ENCODE measurements at regions of chr15 and their contacts with region 1.

Region 1: DNA sequence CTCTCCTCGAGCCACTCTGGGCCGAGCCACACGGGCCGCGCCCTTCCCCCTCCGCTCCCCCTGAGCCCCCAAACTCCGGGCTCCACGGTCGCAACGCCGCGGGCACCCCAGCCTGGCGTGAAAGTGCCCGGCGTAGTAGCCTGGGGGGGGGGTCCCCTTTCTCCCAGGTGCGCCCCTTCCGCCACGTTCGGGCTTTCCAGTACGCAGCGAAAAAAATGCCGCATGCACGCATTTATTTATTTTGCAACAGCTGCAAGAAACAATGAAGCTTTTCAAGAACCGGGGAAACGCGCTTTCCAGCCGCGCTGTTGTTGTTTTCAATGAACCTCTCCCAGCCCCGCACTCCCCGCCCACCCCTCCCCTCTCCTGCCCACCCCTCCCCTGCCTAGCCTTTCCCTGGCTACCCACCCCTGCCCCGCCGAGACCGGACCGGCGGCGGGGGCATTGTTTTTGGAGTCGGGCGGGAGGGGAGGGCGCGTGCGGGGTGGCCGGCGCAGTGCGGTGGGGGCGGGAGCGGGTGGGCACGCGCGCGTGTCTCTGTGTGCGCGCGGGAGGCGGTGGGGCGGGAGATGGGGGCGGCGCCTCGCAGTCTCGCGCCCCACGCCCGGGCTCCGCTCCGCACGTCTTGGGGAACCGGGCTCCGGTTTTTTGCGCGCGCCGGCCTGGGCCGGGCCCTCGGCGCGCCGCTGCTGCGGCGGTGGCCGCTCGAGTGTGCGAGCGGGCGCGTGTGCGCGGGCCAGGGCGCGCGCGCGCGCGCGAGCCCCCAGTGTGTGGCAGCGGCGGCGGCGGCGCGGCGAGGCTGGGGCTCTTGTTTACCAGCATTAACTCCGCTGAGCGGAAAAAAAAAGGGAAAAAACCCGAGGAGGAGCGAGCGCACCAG is at the start of gene IGF1R:
- DNase-seq: peak; percentile 93
- ATAC-seq: peak; percentile 36
- H3K4me3 ChIP-seq: peak within 1 kb of the TSS; percentile 84
- H3K27ac ChIP-seq: no peak within 1 kb of the TSS
- H3K4me1 ChIP-seq: no peaks in the 10 kb centered on the region
- H3K27me3 ChIP-seq: peaks cover 75% of the 10 kb centered on the region
- CTCF ChIP-seq: no peak
- total RNA-seq, gene IGF1R: 3.8 and 15.8 TPM in 2 replicates

Region 2: DNA sequence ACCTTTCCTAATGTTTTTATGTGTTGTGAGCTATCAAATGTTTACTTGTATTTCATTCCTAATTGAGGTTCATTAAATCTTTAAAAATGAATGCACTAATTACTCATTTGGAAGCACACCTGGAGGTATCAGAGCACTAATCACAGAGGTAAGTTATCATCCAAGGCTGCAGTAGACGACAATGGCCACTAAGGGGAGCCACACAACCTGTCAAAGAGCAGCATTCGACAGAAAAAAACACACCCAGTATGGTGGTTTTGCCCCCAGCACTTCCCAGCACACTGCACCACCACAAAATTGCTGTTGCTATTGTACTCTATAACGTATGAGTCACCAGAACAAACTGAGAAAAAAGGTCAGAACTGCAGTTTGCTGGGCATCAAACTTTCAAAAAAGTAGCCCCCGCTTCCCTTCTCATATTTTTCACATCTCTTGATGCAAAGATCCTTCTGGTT is 205.6 kb before region 1 on chr15:
- CTCF ChIA-PET with region 1: no interaction called
- POLR2A ChIA-PET with region 1: no interaction called
- intact Hi-C with region 1: loop called (anchors 5 kb)
- DNase-seq: peak; percentile 88
- ATAC-seq: peak; percentile 92
- H3K4me3 ChIP-seq: no peak overlapping the region
- H3K27ac ChIP-seq: no peak overlapping the region
- H3K4me1 ChIP-seq: peaks cover 9% of the 10 kb centered on the region
- H3K27me3 ChIP-seq: peaks cover 24% of the 10 kb centered on the region
- CTCF ChIP-seq: peak; percentile 93

Region 3: DNA sequence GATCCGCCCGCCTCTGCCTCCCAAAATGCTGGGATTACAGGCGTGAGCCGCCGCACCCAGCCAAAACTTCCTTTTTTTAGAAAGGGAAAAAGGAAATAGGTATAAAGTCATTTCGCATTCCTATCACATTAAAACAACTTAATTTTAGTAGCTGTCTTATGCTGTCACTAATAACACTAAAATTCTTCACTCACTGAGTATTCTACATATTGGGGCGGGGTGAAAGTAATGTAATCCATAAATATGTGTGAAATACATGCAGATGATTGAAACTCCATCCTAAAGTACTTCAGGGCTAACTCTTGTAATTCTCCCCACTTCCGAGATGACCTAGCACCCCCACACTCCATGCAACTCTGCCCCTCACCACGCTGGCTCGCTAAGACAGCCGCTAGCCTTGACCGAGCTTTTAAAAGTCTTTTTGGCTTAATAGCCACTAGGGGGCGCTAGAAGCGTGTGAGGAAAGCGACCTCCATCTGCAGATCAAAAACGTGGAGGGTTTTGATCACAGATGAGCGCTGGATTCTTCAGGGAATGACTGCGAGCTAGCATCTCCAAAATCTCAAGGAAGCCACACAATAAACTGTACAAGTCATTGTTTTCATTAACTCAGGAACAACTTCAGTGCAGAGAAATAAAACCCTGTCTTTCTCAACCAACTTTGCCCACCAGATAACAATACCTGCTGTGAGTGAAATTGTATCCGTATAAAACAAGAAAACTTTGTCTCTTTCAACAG is 129.0 kb before region 1 on chr15:
- CTCF ChIA-PET with region 1: no interaction called
- POLR2A ChIA-PET with region 1: no interaction called
- intact Hi-C with region 1: loop called (anchors 5 kb)
- DNase-seq: peak; percentile 77
- ATAC-seq: peak; percentile 88
- H3K4me3 ChIP-seq: no peak overlapping the region
- H3K27ac ChIP-seq: no peak overlapping the region
- H3K4me1 ChIP-seq: no peaks in the 10 kb centered on the region
- H3K27me3 ChIP-seq: peaks cover 8% of the 10 kb centered on the region; the same call in 1 of the 2 replicates
- CTCF ChIP-seq: peak; percentile 90

Region 4: GRCh38 chr15:98604983-98605382 is 43.0 kb before region 1 on chr15:
- CTCF ChIA-PET with region 1: no interaction called
- POLR2A ChIA-PET with region 1: no interaction called
- intact Hi-C with region 1: no loop called
- DNase-seq: no peak
- ATAC-seq: no peak
- H3K4me3 ChIP-seq: no peak overlapping the region
- H3K27ac ChIP-seq: no peak overlapping the region
- H3K4me1 ChIP-seq: peaks cover 9% of the 10 kb centered on the region
- H3K27me3 ChIP-seq: peaks cover 8% of the 10 kb centered on the region; the same call in 1 of the 2 replicates
- CTCF ChIP-seq: no peak

Region 5: GRCh38 chr15:98700519-98700918 is 52.5 kb after region 1 on chr15:
- CTCF ChIA-PET with region 1: no interaction called
- POLR2A ChIA-PET with region 1: no interaction called
- intact Hi-C with region 1: no loop called
- DNase-seq: no peak
- ATAC-seq: no peak
- H3K4me3 ChIP-seq: no peak overlapping the region
- H3K27ac ChIP-seq: no peak overlapping the region
- H3K4me1 ChIP-seq: no peaks in the 10 kb centered on the region
- H3K27me3 ChIP-seq: no peaks in the 10 kb centered on the region
- CTCF ChIP-seq: no peak

Region 6: DNA sequence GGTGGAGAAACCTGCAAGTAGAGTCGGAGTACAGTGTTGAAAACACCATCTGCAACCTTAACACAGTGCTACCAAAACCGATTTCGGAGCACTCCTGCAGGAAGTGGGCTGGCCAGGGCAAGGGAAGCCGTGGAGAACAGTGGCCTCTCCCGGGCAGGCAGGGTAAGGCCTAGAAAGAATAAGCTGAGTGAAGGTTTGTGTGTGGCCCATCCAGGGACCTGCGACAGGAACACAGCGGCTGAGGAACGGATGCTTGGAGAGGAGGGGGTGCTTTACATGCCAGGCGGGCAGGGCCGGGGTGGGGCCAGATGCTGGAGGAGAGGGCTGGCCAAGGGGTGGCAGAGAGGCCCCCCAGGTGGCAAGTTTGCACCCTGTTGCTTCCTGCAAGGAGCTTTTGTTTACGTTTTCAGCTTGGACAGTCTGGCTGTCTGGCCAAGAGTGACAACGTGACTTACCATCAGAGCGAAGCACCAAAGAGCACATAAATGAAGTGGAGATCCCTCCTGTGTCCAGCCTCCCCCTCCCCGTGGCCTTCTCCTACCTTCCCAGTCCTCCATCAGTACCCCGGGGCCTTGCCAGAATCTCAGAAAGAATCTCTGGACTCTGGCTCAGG is 203.1 kb after region 1 on chr15:
- CTCF ChIA-PET with region 1: interaction called, 4 read pairs
- POLR2A ChIA-PET with region 1: no interaction called
- intact Hi-C with region 1: loop called (anchors 1 kb)
- DNase-seq: peak; percentile 76
- ATAC-seq: peak; percentile 57
- H3K4me3 ChIP-seq: peak overlapping the region; percentile 84
- H3K27ac ChIP-seq: no peak overlapping the region
- H3K4me1 ChIP-seq: peaks cover 48% of the 10 kb centered on the region
- H3K27me3 ChIP-seq: no peaks in the 10 kb centered on the region
- CTCF ChIP-seq: peak; percentile 88